CD8-positive, alpha-beta T cell (primary cell): ENCODE measurements at regions of chr12 and their contacts with region 1.

Region 1: GRCh38 chr12:119115296-119115905 is 63.3 kb upstream of the HSPB8 start:
- DNase-seq: peak in 3 of 9 experiments; percentile 7 to 39 (median 20)
- ATAC-seq: no peak
- H3K4me3 ChIP-seq: no peak overlapping the region
- H3K4me3 Mint-ChIP-seq: no peak overlapping the region
- H3K27ac ChIP-seq: no peak overlapping the region
- H3K27ac Mint-ChIP-seq: no peak overlapping the region
- H3K4me1 ChIP-seq: no peaks in the 10 kb centered on the region
- H3K4me1 Mint-ChIP-seq: no peaks in the 10 kb centered on the region
- H3K27me3 ChIP-seq: no peaks in the 10 kb centered on the region
- H3K27me3 Mint-ChIP-seq: peaks cover 6% of the 10 kb centered on the region
- CTCF ChIP-seq: peak; percentile 75

Region 2: DNA sequence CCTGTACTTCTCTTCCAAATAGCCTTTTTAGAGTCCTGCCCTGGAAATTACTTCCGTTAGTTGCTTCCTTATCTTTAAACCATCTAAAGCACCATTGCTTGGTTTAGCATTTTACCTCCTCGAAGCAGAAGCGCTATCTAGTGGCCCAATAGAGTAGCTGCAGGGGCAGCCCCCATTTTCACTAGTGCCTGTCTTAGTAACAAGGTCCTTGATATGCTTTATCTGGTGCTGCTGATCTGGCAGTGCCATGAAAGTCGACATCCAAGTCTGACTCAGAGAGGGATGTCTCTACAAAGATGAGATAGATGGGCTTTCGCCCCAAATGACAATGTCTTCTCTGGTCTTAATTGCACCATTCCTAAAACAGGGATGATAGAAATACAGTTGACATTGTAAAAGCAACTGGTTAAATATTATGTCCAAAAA is 786.7 kb after region 1 on chr12:
- CTCF ChIA-PET with region 1: no interaction called
- POLR2A ChIA-PET with region 1: no interaction called
- intact Hi-C with region 1: loop called in 1 of 2 experiments (anchors 10 kb)
- DNase-seq: peak; percentile 44 to 78 (median 69)
- ATAC-seq: peak; percentile 100
- H3K4me3 ChIP-seq: no peak overlapping the region
- H3K4me3 Mint-ChIP-seq: no peak overlapping the region
- H3K27ac ChIP-seq: no peak overlapping the region
- H3K27ac Mint-ChIP-seq: no peak overlapping the region
- H3K4me1 ChIP-seq: no peaks in the 10 kb centered on the region
- H3K4me1 Mint-ChIP-seq: peaks cover 5% of the 10 kb centered on the region
- H3K27me3 ChIP-seq: no peaks in the 10 kb centered on the region
- H3K27me3 Mint-ChIP-seq: no peaks in the 10 kb centered on the region
- CTCF ChIP-seq: peak; percentile 79